Ovary (tissue), 10 donors: ENCODE measurements at regions of chr3 and their contacts with region 1.

Region 1: GRCh38 chr3:142987080-142987700 is 14.2 kb upstream of the U2SURP start:
- DNase-seq: no peak
- H3K4me3 ChIP-seq: no peak overlapping the region
- H3K27ac ChIP-seq: no peak overlapping the region
- H3K4me1 ChIP-seq: peaks cover 1% of the 10 kb centered on the region
- H3K27me3 ChIP-seq: no peaks in the 10 kb centered on the region
- CTCF ChIP-seq: peak in 2 of 3 donors; percentile 19 to 50
- EP300 ChIP-seq: no peak
- POLR2A ChIP-seq: no peak

Region 2: GRCh38 chr3:141570068-141570467 is 1417.1 kb before region 1 on chr3:
- intact Hi-C with region 1: no loop called
- DNase-seq: no peak
- H3K4me3 ChIP-seq: no peak overlapping the region
- H3K27ac ChIP-seq: no peak overlapping the region
- H3K4me1 ChIP-seq: no peaks in the 10 kb centered on the region
- H3K27me3 ChIP-seq: no peaks in the 10 kb centered on the region
- CTCF ChIP-seq: no peak
- EP300 ChIP-seq: no peak
- POLR2A ChIP-seq: no peak

Region 3: DNA sequence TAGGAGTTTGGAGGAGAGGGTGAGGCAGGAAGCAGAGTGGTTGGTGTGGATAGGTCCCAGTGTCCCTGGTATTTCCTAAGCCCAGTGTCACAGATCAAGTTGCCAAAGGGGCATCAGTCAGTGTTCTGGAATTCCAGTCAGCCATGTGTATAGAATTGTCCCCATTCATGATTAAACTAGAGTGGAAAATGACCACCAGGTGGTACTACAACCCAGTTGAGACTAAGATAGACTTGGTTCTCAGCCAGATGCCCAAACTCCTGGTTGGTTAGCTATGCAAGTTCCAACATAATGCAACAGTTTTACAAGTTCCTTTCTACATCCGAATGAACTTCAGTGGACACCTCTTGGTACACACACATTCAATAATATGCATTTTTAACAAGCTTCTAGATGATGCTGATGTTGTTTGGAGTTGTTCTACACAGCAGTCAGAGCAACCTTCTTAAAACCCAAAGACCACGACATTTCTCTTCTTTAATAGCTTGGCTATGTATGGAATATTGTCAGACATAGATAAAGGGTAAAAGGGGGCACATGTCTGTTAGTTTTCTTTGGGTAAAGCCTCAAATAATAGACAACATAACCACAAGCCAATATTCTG is 400.3 kb before region 1 on chr3:
- intact Hi-C with region 1: loop called in 2 of 4 experiments (anchors 10 kb)
- DNase-seq: no peak
- H3K4me3 ChIP-seq: no peak overlapping the region
- H3K27ac ChIP-seq: no peak overlapping the region
- H3K4me1 ChIP-seq: no peaks in the 10 kb centered on the region
- H3K27me3 ChIP-seq: no peaks in the 10 kb centered on the region
- CTCF ChIP-seq: peak in 1 of 3 donors; percentile 34
- EP300 ChIP-seq: no peak
- POLR2A ChIP-seq: no peak

Region 4: GRCh38 chr3:142828703-142829305 is 158.4 kb before region 1 on chr3:
- intact Hi-C with region 1: loop called in 2 of 4 experiments (anchors 5 kb)
- DNase-seq: peak; percentile 68 to 90 (median 81)
- H3K4me3 ChIP-seq: no peak overlapping the region
- H3K27ac ChIP-seq: no peak overlapping the region
- H3K4me1 ChIP-seq: no peaks in the 10 kb centered on the region
- H3K27me3 ChIP-seq: no peaks in the 10 kb centered on the region
- CTCF ChIP-seq: peak; percentile 40 to 65 (median 53)
- EP300 ChIP-seq: no peak
- POLR2A ChIP-seq: no peak

Region 5: GRCh38 chr3:143266927-143267326 is 279.7 kb after region 1 on chr3:
- intact Hi-C with region 1: no loop called
- DNase-seq: no peak
- H3K4me3 ChIP-seq: no peak overlapping the region
- H3K27ac ChIP-seq: no peak overlapping the region
- H3K4me1 ChIP-seq: no peaks in the 10 kb centered on the region
- H3K27me3 ChIP-seq: no peaks in the 10 kb centered on the region
- CTCF ChIP-seq: no peak
- EP300 ChIP-seq: no peak
- POLR2A ChIP-seq: no peak